WTC11 (cell line): ENCODE measurements at regions of chr5 and their contacts with region 1.

Region 1: DNA sequence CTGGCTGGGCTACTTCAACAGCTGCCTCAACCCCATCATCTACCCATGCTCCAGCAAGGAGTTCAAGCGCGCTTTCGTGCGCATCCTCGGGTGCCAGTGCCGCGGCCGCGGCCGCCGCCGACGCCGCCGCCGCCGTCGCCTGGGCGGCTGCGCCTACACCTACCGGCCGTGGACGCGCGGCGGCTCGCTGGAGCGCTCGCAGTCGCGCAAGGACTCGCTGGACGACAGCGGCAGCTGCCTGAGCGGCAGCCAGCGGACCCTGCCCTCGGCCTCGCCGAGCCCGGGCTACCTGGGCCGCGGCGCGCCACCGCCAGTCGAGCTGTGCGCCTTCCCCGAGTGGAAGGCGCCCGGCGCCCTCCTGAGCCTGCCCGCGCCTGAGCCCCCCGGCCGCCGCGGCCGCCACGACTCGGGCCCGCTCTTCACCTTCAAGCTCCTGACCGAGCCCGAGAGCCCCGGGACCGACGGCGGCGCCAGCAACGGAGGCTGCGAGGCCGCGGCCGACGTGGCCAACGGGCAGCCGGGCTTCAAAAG is 36.9 kb upstream of the TTC1 start:
- DNase-seq: peak; percentile 60
- ATAC-seq: peak; percentile 77
- H3K4me3 Mint-ChIP-seq: peak overlapping the region; percentile 58
- H3K27ac Mint-ChIP-seq: no peak overlapping the region
- H3K4me1 Mint-ChIP-seq: peaks cover 12% of the 10 kb centered on the region
- H3K27me3 Mint-ChIP-seq: peaks cover 55% of the 10 kb centered on the region
- CTCF ChIP-seq: no peak

Region 2: DNA sequence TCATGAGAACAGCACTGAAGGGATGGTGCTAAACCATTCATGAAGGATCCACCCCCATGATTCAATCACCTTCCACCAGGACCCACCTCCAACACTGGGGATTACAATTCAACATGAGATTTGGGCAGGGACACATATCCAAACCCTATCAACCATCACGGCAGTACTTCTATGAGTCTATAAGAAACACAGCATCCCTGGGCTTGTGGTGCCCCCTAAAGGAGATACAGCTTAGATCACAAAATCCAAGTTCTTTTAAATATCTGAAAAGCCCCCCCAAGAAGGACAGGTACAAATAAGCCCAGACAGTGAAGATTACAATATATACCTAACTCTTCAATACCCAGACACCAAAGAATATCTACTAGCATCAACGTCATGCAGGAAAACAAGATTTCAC is 289.4 kb before region 1 on chr5:
- CTCF ChIA-PET with region 1: no interaction called
- POLR2A ChIA-PET with region 1: no interaction called
- DNase-seq: no peak
- ATAC-seq: no peak
- H3K4me3 Mint-ChIP-seq: no peak overlapping the region
- H3K27ac Mint-ChIP-seq: no peak overlapping the region
- H3K4me1 Mint-ChIP-seq: no peaks in the 10 kb centered on the region
- H3K27me3 Mint-ChIP-seq: no peaks in the 10 kb centered on the region; the same call in 1 of the 2 replicates
- CTCF ChIP-seq: no peak

Region 3: GRCh38 chr5:159951387-159951786 is 20.6 kb before region 1 on chr5:
- CTCF ChIA-PET with region 1: interaction called, 10 read pairs
- POLR2A ChIA-PET with region 1: no interaction called
- DNase-seq: peak; percentile 30
- ATAC-seq: peak; percentile 96
- H3K4me3 Mint-ChIP-seq: no peak overlapping the region
- H3K27ac Mint-ChIP-seq: no peak overlapping the region
- H3K4me1 Mint-ChIP-seq: no peaks in the 10 kb centered on the region
- H3K27me3 Mint-ChIP-seq: peaks cover 3% of the 10 kb centered on the region; the same call in 1 of the 2 replicates
- CTCF ChIP-seq: no peak

Region 4: GRCh38 chr5:159995907-159996306 is 23.9 kb after region 1 on chr5:
- CTCF ChIA-PET with region 1: no interaction called
- POLR2A ChIA-PET with region 1: no interaction called
- DNase-seq: no peak
- ATAC-seq: no peak
- H3K4me3 Mint-ChIP-seq: no peak overlapping the region
- H3K27ac Mint-ChIP-seq: no peak overlapping the region
- H3K4me1 Mint-ChIP-seq: no peaks in the 10 kb centered on the region
- H3K27me3 Mint-ChIP-seq: peaks cover 22% of the 10 kb centered on the region
- CTCF ChIP-seq: no peak